AG04449 (cell line): ENCODE measurements at regions of chr1 and their contacts with region 1.

Region 1: GRCh38 chr1:31961536-31961935 is 23.4 kb upstream of the PTP4A2 start:
- DNase-seq: no peak
- H3K4me3 ChIP-seq: no peak overlapping the region
- CTCF ChIP-seq: no peak

Region 2: DNA sequence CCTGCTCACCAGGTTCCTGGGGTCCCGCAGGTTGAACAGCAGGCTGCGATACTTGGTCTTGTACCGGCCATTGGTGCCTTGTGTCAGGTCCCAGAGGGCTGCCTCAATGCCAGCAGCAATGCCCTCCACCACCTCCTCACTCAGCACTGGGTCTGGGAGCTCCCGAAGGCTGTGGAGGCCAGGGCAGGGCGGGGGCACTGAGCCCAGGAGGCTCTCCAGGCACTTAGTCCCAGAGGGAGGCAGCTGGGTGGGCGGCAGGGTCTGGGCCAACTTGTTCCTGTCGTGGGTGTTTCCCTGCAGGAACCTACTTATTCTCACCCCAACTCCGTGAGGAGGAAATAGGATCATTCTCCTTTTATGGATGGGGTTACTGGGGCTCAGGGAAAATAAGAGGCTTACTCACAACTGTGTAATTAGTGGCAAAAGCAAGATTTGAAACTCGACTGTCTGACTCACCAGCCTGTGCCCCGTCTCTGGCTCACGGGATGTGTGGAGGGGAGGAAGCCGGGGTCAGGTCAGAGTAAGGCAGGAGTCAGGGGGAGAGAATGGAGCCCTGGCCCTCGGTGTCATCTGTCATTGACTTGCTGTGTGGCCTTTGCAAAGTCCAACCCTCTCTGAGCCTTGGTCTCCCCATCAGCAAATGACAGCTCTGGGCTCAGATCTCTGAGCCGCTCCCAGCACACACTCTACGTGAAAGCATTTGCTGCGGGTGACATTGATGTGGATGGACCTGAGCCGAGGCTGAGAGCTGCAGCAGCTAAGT is 162.9 kb before region 1 on chr1:
- CTCF ChIA-PET with region 1: interaction called, 63 read pairs
- POLR2A ChIA-PET with region 1: interaction called, 8 read pairs
- DNase-seq: peak; percentile 81
- H3K4me3 ChIP-seq: peak overlapping the region; percentile 93
- CTCF ChIP-seq: no peak

Region 3: DNA sequence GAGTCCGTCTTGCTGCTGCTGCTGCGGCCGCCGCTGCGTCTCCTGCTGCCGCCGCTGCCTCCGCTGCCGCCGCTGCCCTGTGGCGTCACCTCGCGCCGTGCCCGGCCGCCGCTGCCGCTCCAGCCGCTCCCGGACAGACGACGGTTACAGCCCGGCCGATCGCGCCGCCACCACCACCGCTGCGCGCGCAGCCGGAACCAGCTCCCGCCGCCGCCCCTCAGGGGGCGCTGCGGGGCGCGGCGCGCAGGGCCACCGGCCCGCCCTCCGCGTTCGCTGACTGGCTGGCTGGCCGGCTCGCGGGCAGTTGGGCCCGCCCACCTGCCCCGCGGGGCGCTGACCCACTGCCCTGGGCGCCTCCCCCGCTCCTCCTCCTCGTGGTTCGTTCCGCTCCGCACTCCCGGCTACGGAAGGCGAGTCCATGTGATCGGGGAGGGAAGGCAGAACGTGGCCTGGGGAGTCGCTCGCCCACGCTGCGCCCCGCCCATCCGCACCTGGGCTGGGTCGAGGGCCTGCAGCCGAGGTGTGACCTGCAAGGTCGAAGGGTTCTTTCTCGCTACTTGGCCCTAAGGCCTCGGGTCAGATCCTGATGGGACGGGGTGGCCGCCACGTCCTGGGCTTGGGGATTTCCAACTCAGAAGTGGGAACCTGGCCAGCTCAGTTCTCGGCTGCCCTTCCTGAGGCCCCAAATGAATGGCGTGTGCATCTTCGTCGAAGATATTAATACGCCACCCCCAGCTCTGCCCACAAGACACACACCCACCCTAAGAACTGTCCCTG is 23.2 kb before region 1 on chr1 and contains the start of gene PTP4A2:
- CTCF ChIA-PET with region 1: interaction called, 102 read pairs
- POLR2A ChIA-PET with region 1: interaction called, 31 read pairs
- DNase-seq: no peak
- H3K4me3 ChIP-seq: peak within 1 kb of the TSS; percentile 97
- CTCF ChIP-seq: no peak

Region 4: GRCh38 chr1:31944205-31945089 is 17.1 kb before region 1 on chr1:
- CTCF ChIA-PET with region 1: interaction called, 102 read pairs
- POLR2A ChIA-PET with region 1: interaction called, 31 read pairs
- DNase-seq: no peak
- H3K4me3 ChIP-seq: peak overlapping the region; percentile 46
- CTCF ChIP-seq: no peak

Region 5: DNA sequence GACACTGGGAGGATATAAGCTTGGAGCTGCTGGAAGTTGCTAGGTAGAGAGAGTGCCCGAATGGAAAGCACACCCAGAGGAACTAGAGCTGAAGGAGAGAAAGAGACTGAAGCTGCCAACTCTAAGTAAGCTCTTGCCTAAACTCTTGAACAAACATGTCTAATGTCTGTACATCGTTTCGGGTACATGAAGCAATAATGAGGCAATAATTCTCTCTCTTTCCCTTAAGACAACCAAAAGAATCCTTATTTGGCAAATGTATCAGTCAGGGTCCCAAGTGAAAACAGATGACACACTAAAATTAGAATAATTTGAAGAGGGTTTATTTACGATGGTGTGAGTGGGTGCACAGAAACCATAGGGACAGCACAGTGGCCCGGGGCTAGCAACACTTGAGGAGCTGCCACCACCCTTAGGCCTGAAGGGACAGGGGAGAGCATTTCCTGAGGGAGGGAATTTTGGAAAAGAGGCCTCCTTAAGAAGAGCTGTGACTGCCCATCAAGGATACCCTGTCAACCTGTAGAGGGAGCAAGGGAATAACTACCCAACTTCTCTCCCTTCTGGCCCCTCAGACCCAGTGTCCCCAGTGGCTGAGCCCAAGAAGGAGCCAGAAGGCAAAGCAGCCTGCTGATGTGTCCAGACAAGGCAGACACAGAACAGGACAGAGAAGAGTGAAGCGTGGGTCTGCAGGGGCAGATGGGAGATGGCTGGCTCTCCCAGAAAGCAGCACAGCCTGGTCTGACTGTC is 16.0 kb after region 1 on chr1:
- CTCF ChIA-PET with region 1: interaction called, 109 read pairs
- POLR2A ChIA-PET with region 1: no interaction called
- DNase-seq: peak; percentile 59
- H3K4me3 ChIP-seq: no peak overlapping the region
- CTCF ChIP-seq: peak; percentile 41